ENCODE measurements at regions of chr12 and their contacts with region 1.

Region 1: DNA sequence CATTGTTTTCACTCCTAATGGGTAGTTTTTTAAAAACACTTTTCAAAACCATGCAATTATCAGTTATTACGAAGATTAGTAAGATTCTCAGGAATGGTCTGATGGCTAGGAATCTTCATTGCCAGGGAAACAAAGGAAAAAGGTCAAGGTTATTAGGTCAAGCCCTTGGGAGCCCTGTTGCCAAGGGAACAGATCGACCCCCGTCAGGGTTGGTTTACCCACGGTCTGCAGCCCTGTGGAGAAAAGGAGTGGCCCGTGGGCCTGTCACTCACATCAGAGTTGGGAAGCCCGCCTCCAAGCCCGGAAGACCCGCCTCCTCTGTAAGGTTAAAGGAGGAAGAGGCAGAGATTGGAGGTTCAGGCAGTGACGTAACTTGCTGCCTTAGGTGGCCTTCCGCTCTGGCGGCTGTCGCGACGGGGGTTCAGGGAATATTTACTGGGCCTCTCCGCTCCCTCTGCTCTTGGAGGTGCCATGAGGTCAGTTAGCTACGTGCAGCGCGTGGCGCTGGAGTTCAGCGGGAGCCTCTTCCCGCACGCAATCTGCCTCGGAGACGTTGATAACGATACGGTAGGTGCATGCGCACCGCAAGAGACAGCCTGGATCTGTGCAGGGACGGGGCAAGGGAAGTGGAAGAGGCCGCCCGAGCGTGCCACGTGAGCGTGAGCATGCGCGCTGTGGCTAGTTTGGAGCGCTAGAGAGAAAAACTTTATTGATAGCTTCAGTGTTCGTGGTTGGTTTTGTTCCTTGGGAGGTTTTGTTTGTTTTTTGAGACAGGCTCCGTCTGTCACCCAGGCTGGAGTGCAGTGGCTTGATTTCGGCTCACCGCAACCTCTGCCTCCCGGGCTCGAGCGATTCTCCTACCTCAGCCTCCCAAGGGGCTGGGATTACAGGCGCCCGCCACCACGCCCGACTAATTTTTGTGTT is at the start of gene ITFG2:
- DNase-seq: peak; percentile 99
- ATAC-seq: peak; percentile 94
- H3K4me3 Mint-ChIP-seq: peak within 1 kb of the TSS; percentile 93
- H3K27ac Mint-ChIP-seq: peak within 1 kb of the TSS; percentile 98
- H3K4me1 Mint-ChIP-seq: peaks cover 34% of the 10 kb centered on the region
- H3K27me3 Mint-ChIP-seq: no peaks in the 10 kb centered on the region
- CTCF ChIP-seq: no peak
- total RNA-seq, gene ITFG2: 25.4 to 25.8 TPM

Region 2: GRCh38 chr12:2666411-2666810 is 146.1 kb before region 1 on chr12:
- CTCF ChIA-PET with region 1: no interaction called
- POLR2A ChIA-PET with region 1: no interaction called
- intact Hi-C with region 1: no loop called
- DNase-seq: no peak
- ATAC-seq: peak; percentile 45
- H3K4me3 Mint-ChIP-seq: no peak overlapping the region
- H3K27ac Mint-ChIP-seq: no peak overlapping the region
- H3K4me1 Mint-ChIP-seq: no peaks in the 10 kb centered on the region
- H3K27me3 Mint-ChIP-seq: no peaks in the 10 kb centered on the region
- CTCF ChIP-seq: no peak

Region 3: DNA sequence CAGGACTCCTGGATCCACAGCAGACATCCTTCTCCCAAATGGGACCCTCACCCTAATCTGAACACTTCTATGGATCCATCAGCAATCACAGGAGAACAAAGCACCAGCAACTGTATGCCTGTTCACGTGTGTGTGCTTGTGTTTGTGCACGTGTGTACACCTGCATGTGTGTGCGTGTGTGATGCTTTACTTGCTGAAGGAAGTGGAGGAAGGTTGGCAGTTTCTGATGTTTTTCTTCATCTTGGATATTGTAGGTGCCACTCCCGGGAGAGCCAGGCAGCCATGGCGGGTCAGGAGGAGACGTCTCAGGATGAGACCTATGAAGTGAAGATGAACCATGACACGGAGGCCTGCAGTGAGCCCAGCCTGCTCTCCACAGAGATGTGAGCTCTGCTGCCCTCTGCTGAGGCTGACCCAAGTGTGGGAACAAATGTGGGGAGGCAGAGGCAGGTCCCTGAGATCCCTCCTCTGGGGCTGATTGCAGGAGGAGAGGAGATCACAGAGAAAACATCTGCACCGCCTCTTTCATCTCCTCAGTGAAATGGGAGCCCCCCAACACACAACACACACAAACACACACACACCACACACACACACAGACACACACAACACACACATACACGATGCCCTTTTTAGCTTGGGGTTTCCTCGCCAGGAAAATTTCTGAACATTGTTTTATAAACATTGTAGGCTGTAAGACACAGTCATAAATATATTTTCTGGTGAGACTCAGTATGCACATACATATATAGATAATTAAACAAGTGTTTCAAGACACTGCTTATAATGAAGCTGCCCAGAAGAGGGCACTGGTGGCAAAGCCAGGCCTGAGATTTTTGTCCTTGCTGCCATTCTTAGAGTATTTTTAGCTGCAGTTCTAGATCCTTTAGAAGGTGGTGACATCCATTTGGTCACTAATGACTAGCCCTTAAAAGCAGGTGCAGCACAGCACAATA is 130.0 kb before region 1 on chr12:
- CTCF ChIA-PET with region 1: interaction called, 13 read pairs
- POLR2A ChIA-PET with region 1: no interaction called
- intact Hi-C with region 1: no loop called
- DNase-seq: peak; percentile 72
- ATAC-seq: peak; percentile 77
- H3K4me3 Mint-ChIP-seq: no peak overlapping the region
- H3K27ac Mint-ChIP-seq: peak overlapping the region; percentile 87
- H3K4me1 Mint-ChIP-seq: peaks cover 7% of the 10 kb centered on the region
- H3K27me3 Mint-ChIP-seq: no peaks in the 10 kb centered on the region
- CTCF ChIP-seq: peak; percentile 68

Region 4: DNA sequence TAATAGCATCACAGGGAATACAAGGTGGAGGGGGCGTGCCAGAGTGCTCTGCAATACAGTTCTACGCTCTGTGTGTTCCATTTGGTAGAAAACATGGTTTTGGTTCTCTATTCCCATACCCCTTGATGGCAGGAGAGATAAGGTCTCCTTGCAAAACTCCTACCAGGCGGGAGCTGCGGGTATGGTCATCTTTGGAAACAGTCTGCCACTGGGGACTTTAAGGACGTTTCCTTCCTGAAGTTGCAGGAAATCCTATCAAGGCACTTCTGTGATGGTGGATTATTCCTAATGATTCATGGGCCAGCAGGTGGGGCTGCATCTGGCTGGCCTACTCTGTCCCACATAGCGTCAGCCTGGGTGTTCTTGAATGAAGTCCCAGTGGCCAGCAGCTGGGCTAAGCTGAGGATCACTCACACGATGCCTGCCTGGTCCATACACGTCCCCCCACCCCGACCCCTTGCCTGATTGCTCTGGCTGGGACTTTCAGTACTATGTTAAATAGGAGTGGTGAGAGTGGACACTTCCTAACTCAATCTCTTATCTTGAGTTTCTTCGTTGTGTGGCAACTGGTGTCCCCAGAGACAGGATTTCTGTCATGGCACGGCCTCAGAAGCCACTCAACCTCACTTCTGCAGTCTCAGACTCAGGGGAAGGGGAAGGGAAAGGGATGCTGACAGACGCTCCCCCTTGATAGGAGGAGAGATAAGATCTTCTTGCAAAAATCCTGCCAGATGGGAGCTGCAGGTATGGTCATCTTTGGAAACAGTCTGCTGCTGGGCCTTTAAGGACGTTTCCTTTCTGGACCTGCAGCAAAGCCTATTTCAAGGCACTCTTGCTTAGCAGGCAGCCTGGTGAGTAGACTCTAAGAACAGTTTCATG is 78.8 kb before region 1 on chr12:
- CTCF ChIA-PET with region 1: no interaction called
- POLR2A ChIA-PET with region 1: no interaction called
- intact Hi-C with region 1: no loop called
- DNase-seq: no peak
- ATAC-seq: no peak
- H3K4me3 Mint-ChIP-seq: no peak overlapping the region
- H3K27ac Mint-ChIP-seq: no peak overlapping the region
- H3K4me1 Mint-ChIP-seq: peaks cover 12% of the 10 kb centered on the region
- H3K27me3 Mint-ChIP-seq: no peaks in the 10 kb centered on the region
- CTCF ChIP-seq: no peak

Measured in activated CD8-positive, alpha-beta T cell treated with anti-CD3 and anti-CD28 coated beads for 36 hours (primary cell).